ENCODE measurements at regions of chr2 and their contacts with region 1.

Region 1: GRCh38 chr2:217497843-217498377 is 504.9 kb downstream of the TNS1 start:
- DNase-seq: no peak
- ATAC-seq: no peak
- H3K4me3 ChIP-seq: no peak overlapping the region
- H3K27ac ChIP-seq: no peak overlapping the region
- H3K4me1 ChIP-seq: no peaks in the 10 kb centered on the region
- H3K27me3 ChIP-seq: no peaks in the 10 kb centered on the region
- CTCF ChIP-seq: no peak

Region 2: DNA sequence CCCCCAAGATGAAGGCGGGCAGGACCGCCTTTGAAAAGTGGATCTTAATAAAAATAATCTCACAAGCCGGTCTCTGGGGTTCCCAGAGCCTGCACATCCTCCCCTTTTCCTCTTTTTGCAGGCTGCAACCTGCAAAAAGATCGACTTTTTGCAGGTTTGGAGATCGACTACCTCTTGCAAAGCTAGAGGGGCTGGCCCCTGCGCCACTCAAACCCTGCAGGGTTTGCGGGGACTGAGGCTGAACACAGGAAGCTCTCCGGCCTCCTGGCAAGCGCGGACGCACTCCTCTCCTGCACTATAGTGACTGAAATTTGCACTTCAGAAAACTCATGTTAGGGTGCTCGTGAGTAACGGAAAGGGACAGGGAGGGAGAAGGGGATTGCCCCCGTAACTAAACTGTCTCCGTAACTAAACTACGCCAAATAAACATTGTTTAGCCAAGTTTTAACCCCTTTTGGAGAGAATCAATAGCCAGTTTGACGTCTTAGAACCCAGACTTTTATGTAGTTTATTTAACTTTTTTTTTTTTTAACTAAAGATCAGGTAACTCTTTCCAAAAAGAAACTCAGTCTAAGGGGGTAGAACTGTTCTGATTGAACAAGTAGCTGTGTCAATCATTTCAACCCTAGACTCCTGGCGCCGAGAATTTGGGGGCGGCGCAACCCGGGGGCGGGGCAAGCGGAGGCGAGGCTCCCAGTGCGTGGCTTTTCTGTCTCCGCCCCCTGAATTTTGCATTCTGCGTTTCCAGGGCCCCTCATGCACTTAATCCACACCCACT is 805.1 kb before region 1 on chr2:
- intact Hi-C with region 1: loop called in 1 of 10 experiments (anchors 5 kb)
- DNase-seq: peak; percentile 88 to 93
- ATAC-seq: peak; percentile 48 to 77 (median 64)
- H3K4me3 ChIP-seq: peak overlapping the region; percentile 26 to 75 (median 71)
- H3K27ac ChIP-seq: peak overlapping the region; percentile 66 to 95 (median 85)
- H3K4me1 ChIP-seq: peaks cover 11 to 77% (median 62%) of the 10 kb centered on the region in 9 donors
- H3K27me3 ChIP-seq: peaks cover 0 to 91% (median 0%) of the 10 kb centered on the region in 7 donors
- CTCF ChIP-seq: no peak

Region 3: GRCh38 chr2:217451666-217452065 is 46.2 kb before region 1 on chr2:
- intact Hi-C with region 1: no loop called
- DNase-seq: no peak
- ATAC-seq: peak in 2 of 8 donors; percentile 25 to 44
- H3K4me3 ChIP-seq: no peak overlapping the region
- H3K27ac ChIP-seq: no peak overlapping the region
- H3K4me1 ChIP-seq: peaks cover 0 to 6% (median 0%) of the 10 kb centered on the region in 9 donors
- H3K27me3 ChIP-seq: no peaks in the 10 kb centered on the region
- CTCF ChIP-seq: no peak